ENCODE measurements at regions of chrX and their contacts with region 1.

Region 1: GRCh38 chrX:153763989-153764755 is at the start of gene PLXNB3:
- DNase-seq: peak; percentile 87
- H3K4me3 ChIP-seq: peak within 1 kb of the TSS; percentile 40 to 49
- H3K27ac ChIP-seq: peak within 1 kb of the TSS in 1 of 2 experiments; percentile 82; a peak in 3 of 4 replicates
- H3K4me1 ChIP-seq: peaks cover 2 to 27% of the 10 kb centered on the region in 2 experiments; a peak in 1 of 4 replicates
- H3K27me3 ChIP-seq: no peaks in the 10 kb centered on the region
- CTCF ChIP-seq: peak; percentile 92
- EP300 ChIP-seq: no peak
- RAD21 ChIP-seq: peak; percentile 90
- polyA plus RNA-seq, gene PLXNB3: 13.8 and 15.5 TPM in 2 replicates

Region 2: GRCh38 chrX:153726286-153727122 is 37.7 kb before region 1 on chrX:
- CTCF ChIA-PET with region 1: interaction called, 11 read pairs
- POLR2A ChIA-PET with region 1: interaction called, 4 read pairs
- DNase-seq: peak; percentile 80
- H3K4me3 ChIP-seq: peak overlapping the region; percentile 33 to 47
- H3K27ac ChIP-seq: peak overlapping the region; percentile 47 to 76
- H3K4me1 ChIP-seq: peaks cover 7 to 38% of the 10 kb centered on the region in 2 experiments; a peak in 3 of 4 replicates
- H3K27me3 ChIP-seq: no peaks in the 10 kb centered on the region
- CTCF ChIP-seq: no peak
- EP300 ChIP-seq: no peak
- RAD21 ChIP-seq: no peak

Region 3: DNA sequence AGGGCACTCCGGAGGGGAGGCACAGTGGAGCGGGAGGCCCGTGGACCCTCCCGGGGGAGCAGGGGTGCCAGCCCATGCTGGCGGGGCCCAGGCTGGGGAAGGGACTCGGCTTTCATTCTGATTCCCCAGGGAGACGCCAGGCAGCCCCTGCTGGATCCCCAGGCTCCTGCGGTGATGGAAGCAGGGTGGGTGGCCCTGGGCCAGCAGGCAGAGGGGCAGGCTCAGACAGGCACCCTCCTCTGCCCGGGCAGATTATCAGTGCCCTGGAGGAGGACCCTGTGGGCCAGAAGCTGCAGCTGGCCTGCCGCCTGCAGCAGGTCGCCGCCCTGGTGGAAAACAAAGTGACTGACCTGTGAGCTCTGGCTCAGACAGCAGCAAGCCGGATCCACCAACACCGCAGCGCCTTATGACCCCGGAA is 14.5 kb after region 1 on chrX:
- CTCF ChIA-PET with region 1: interaction called, 10 read pairs
- POLR2A ChIA-PET with region 1: no interaction called
- DNase-seq: no peak
- H3K4me3 ChIP-seq: no peak overlapping the region
- H3K27ac ChIP-seq: no peak overlapping the region
- H3K4me1 ChIP-seq: peaks cover 0 to 12% of the 10 kb centered on the region in 2 experiments; a peak in 1 of 4 replicates
- H3K27me3 ChIP-seq: 0 out of 2 replicates have a peak, but pooled peaks cover 7% of the 10 kb centered on the region
- CTCF ChIP-seq: peak; percentile 22; the same call in 1 of the 2 replicates
- EP300 ChIP-seq: no peak
- RAD21 ChIP-seq: no peak

Region 4: GRCh38 chrX:153947009-153947769 is 183.0 kb after region 1 on chrX:
- CTCF ChIA-PET with region 1: interaction called, 134 read pairs
- POLR2A ChIA-PET with region 1: no interaction called
- DNase-seq: peak; percentile 91
- H3K4me3 ChIP-seq: no peak overlapping the region
- H3K27ac ChIP-seq: no peak overlapping the region
- H3K4me1 ChIP-seq: peaks cover 0 to 2% of the 10 kb centered on the region in 2 experiments; a peak in 1 of 4 replicates
- H3K27me3 ChIP-seq: no peaks in the 10 kb centered on the region
- CTCF ChIP-seq: peak; percentile 96
- EP300 ChIP-seq: no peak
- RAD21 ChIP-seq: peak; percentile 72